ENCODE measurements at regions of chr6 and their contacts with region 1.

Region 1: GRCh38 chr6:110528101-110528929 is 51.9 kb upstream of the SLC22A16 start:
- DNase-seq: peak in 1 of 3 donors; percentile 50
- ATAC-seq: peak; percentile 76 to 79
- H3K4me3 ChIP-seq: no peak overlapping the region
- H3K27ac ChIP-seq: no peak overlapping the region
- H3K4me1 ChIP-seq: peaks cover 3% of the 10 kb centered on the region
- H3K27me3 ChIP-seq: no peaks in the 10 kb centered on the region

Region 2: GRCh38 chr6:109824105-109824504 is 704.2 kb before region 1 on chr6:
- intact Hi-C with region 1: no loop called
- DNase-seq: no peak
- ATAC-seq: no peak
- H3K4me3 ChIP-seq: no peak overlapping the region
- H3K27ac ChIP-seq: no peak overlapping the region
- H3K4me1 ChIP-seq: peaks cover 2% of the 10 kb centered on the region
- H3K27me3 ChIP-seq: no peaks in the 10 kb centered on the region

Region 3: GRCh38 chr6:110140650-110141049 is 387.7 kb before region 1 on chr6:
- intact Hi-C with region 1: no loop called
- DNase-seq: no peak
- ATAC-seq: no peak
- H3K4me3 ChIP-seq: no peak overlapping the region
- H3K27ac ChIP-seq: no peak overlapping the region
- H3K4me1 ChIP-seq: no peaks in the 10 kb centered on the region
- H3K27me3 ChIP-seq: no peaks in the 10 kb centered on the region

Region 4: DNA sequence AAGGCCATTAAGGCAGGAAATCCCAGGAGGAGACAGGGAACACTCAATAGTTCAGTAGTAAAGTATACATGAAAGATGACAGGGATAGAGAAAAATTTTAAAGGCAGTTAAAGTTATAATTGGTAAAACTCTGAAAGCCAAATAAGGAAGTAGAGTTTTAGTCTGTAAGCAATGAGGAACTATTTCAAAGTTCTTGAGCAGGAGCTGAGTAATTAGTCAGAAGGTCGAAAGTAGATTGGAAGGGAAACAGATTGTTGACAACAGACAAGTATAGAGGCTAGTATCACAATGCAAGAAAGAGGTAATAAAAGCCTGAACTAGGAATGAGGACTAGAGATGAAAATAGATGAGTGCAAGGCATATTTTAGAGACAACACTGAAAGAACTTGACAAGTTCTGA is 136.6 kb after region 1 on chr6:
- intact Hi-C with region 1: loop called in 1 of 4 experiments (anchors 10 kb)
- DNase-seq: no peak
- ATAC-seq: no peak
- H3K4me3 ChIP-seq: no peak overlapping the region
- H3K27ac ChIP-seq: no peak overlapping the region
- H3K4me1 ChIP-seq: no peaks in the 10 kb centered on the region
- H3K27me3 ChIP-seq: no peaks in the 10 kb centered on the region

Region 5: GRCh38 chr6:110682460-110682853 is 154.1 kb after region 1 on chr6:
- intact Hi-C with region 1: loop called in 1 of 4 experiments (anchors 10 kb)
- DNase-seq: no peak
- ATAC-seq: peak; percentile 96 to 97
- H3K4me3 ChIP-seq: no peak overlapping the region
- H3K27ac ChIP-seq: no peak overlapping the region
- H3K4me1 ChIP-seq: no peaks in the 10 kb centered on the region
- H3K27me3 ChIP-seq: no peaks in the 10 kb centered on the region

Region 6: GRCh38 chr6:110944681-110945151 is 416.4 kb after region 1 on chr6:
- intact Hi-C with region 1: loop called in 2 of 4 experiments (anchors 5 kb)
- DNase-seq: no peak
- ATAC-seq: peak in 1 of 2 donors; percentile 59
- H3K4me3 ChIP-seq: no peak overlapping the region
- H3K27ac ChIP-seq: no peak overlapping the region
- H3K4me1 ChIP-seq: no peaks in the 10 kb centered on the region
- H3K27me3 ChIP-seq: no peaks in the 10 kb centered on the region

Region 7: DNA sequence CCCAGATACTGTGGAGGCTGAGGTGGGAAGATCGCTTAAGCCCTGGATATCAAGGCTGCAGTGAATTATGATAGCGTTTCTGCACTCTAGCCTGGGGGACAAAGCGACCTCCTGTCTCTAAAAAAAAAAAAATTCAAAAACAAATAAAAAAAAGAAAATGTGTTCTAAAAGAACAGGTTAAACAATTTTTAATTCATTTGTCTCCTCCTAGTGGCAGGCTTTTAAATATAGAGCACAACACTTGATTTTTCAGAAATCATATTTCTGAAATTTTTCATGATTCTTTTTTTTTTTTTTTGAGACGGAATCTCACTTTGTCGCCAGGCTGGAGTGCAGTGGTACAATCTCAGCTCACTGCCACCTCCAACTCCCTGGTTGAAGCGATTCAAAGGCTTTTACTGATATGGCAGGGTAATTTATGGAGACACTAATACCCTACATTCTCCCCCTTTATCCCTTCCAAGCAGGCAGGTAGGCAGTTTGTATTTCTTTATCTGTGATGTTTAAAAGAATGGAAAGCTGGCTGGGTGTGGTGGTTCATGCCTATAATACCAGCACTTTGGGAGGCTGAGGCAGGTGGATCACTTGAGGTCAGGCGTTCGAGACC is 421.5 kb after region 1 on chr6:
- intact Hi-C with region 1: loop called (anchors 5 to 10 kb)
- DNase-seq: no peak
- ATAC-seq: no peak
- H3K4me3 ChIP-seq: no peak overlapping the region
- H3K27ac ChIP-seq: no peak overlapping the region
- H3K4me1 ChIP-seq: no peaks in the 10 kb centered on the region
- H3K27me3 ChIP-seq: no peaks in the 10 kb centered on the region

Region 8: DNA sequence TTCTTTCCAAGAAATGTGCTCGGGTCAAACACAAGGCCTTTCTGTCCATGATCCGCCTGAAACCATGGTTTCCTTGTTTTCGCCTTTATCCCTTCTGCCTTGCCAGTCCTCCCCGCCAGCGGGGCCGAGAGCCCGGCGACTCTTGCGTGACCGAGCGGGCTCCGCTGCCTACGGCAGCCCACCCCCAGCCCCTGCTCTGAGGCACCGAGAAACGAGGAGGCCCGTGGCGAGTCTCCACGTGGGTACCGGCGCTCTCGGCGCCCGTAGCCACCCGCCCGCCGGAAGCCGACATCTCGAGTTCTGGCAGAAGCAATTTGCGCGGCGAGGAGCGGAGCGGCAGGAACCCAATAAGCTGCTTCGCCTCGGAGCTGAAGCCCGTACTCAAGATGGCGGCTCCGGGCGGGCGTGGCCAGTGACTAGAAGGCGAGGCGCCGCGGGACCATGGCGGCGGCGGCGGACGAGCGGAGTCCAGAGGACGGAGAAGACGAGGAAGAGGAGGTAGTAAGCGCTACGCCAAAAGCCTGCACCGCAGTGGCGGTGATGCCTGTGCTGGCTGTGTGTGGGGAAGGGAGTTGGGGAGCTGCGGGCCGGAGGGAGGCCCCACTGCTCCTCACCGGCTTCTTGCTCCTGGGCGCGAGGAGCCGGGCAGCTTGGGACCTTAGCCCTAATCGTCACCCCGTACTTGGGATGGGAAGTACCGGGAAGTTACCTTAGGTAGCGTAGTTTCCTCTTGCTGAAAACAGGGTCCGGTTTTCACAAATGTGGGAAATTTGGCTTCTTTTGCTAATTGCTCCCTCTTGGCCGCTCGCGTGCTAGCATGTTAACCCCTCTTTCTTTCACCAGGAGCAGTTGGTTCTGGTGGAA is 430.2 kb after region 1 on chr6 and contains the start of gene GTF3C6:
- intact Hi-C with region 1: loop called in 2 of 4 experiments (anchors 5 to 10 kb)
- DNase-seq: peak; percentile 95 to 98 (median 97)
- ATAC-seq: peak; percentile 99 to 100
- H3K4me3 ChIP-seq: peak within 1 kb of the TSS; percentile 76
- H3K27ac ChIP-seq: peak within 1 kb of the TSS; percentile 91
- H3K4me1 ChIP-seq: no peaks in the 10 kb centered on the region
- H3K27me3 ChIP-seq: no peaks in the 10 kb centered on the region
- total RNA-seq, gene GTF3C6: 83.0 to 98.5 (median 86.5) TPM

Measured in right cardiac atrium (tissue), 5 donors.